Posterior vena cava (tissue), 2 donors: ENCODE measurements at regions of chr2 and their contacts with region 1.

Region 1: GRCh38 chr2:24971536-24972314 is at the start of gene DNAJC27:
- DNase-seq: peak; percentile 100
- total RNA-seq, gene DNAJC27: 5.6 to 7.2 TPM

Region 2: DNA sequence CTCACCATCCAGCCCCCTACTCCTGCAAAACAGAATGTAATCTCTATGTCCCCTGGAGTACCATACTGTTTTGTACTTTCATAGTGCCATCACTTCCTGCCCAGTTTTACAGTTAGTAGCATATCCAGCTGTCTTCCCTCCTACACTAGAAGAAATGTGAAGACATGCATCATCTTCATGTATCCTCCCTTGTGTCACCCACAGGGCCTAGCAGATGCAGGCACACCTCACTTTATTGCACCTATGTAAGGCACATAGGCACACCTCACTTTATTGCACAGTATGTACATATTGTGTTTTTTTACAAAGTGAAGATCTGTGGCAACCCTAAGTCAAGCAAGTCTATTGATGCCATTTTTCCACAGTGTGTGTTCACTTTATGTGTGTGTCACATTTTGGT is 12.0 kb before region 1 on chr2:
- intact Hi-C with region 1: no loop called
- DNase-seq: no peak

Region 3: DNA sequence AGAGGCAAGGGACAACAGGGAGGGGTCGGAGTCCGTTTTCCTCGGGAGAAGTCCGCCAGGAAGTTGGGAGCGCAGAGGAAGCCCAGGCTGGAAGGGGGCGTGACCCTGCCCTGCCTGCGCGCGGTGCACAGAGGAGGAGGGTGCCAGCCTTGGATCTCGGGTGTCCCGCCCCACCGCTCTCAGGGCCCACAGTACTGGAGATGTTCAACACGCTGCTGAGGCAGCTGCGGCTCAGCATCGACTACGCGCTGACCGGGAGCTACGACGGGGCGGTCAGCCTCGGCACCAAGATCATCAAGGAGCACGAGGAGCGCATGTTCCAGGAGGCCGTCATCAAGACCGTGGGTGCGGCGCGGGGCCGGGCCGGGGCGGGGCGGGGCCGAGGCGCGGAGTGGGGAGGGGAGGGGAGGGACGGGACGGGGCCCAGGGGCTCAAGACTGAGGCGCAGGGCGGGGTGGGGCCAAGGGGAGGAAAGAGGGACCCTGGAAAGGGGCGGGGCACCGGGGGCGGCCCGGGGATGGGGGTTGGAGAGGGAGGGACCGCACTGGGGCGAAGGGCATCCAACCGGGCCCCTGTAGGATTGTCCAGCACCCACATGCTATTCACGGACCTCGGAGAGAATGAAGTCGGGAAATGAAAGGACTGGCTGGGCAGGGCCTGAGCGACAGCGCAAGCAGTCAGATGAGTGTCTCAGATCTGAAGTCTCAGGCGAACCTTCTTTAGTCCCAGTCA is 160.0 kb after region 1 on chr2:
- intact Hi-C with region 1: loop called (anchors 1 to 2 kb)
- DNase-seq: no peak

Region 4: GRCh38 chr2:25294573-25295462 is 323.1 kb after region 1 on chr2:
- intact Hi-C with region 1: no loop called
- DNase-seq: peak; percentile 94